Tibial artery (tissue), 4 donors: ENCODE measurements at regions of chr14 and their contacts with region 1.

Region 1: DNA sequence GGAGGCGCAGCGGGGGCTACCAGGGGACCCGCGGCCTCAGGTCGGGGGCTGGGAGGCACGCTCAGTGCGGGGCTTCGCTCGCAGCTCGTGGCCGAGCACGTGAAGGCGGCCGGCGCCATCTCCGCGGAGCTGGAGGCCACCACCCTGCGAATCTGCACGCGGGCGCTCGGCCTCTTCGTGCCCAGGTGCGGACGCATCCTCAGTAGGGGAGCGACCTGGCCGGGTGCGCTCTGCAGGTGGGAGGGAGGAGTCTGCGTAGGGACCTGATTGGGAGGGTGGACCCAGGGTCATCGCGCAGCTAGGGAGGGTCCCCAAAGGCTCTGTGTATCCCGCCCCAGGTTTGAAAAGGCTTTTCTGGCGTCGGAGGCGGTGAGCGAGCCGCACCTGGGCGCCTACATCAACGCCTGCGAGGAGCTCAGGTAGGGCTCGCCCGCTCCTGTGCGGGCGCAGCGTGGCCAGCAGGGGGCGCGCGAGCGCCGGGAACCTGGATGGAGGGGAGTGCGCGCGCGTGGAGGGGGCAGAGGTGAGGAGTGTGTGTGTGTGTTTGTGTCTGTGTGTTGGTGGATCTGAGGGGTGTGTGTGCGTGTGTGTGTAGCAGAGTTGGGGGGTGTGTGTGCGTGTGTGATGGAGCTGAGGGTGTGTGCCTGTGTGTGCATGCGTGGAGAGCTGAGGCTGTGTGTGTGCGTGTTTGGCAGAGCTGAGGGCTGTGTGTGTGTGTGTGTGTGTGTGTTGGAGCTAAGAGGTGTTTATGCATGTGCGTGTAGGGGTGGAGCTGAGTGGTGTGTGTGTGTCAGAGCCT is 10.3 kb downstream of the EXOC3L4 start:
- DNase-seq: no peak
- H3K4me3 ChIP-seq: no peak overlapping the region
- H3K27ac ChIP-seq: no peak overlapping the region
- H3K4me1 ChIP-seq: peaks cover 0 to 38% (median 24%) of the 10 kb centered on the region in 4 donors
- H3K27me3 ChIP-seq: peaks cover 3 to 91% of the 10 kb centered on the region in 2 donors
- CTCF ChIP-seq: peak; percentile 92

Region 2: DNA sequence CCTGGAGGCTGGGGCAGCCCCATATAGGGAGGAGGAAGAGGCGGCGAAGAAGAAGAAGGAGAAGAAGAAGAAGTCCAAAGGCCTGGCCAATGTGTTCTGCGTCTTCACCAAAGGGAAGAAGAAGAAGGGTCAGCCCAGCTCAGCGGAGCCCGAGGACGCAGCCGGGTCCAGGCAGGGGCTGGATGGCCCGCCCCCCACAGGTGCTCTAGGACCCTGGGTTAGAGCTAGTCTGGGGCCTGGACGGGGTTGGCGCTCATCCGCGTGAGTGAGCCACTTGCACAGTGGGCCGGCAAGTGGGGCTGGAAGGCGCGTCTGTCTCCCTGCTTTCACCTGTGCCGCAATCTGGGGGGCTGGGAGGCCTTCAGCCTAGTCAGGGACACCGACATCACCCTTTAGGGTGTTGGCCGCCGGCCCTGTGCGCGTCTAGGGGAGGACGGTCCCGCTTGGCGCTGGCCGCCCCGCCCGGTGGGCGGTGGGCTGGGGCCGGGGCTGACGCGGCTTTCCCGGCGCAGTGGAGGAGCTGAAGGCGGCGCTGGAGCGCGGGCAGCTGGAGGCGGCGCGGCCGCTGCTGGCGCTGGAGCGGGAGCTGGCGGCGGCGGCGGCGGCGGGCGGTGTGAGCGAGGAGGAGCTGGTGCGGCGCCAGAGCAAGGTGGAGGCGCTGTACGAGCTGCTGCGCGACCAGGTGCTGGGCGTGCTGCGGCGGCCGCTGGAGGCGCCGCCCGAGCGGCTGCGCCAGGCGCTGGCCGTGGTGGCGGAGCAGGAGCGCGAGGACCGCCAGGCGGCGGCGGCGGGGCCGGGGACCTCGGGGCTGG is 21.8 kb after region 1 on chr14:
- intact Hi-C with region 1: no loop called
- DNase-seq: no peak
- H3K4me3 ChIP-seq: peak overlapping the region; percentile 22 to 47
- H3K27ac ChIP-seq: no peak overlapping the region
- H3K4me1 ChIP-seq: peaks cover 0 to 88% (median 37%) of the 10 kb centered on the region in 4 donors
- H3K27me3 ChIP-seq: peaks cover 0 to 88% of the 10 kb centered on the region in 2 donors
- CTCF ChIP-seq: peak in 1 of 2 experiments; percentile 30

Region 3: DNA sequence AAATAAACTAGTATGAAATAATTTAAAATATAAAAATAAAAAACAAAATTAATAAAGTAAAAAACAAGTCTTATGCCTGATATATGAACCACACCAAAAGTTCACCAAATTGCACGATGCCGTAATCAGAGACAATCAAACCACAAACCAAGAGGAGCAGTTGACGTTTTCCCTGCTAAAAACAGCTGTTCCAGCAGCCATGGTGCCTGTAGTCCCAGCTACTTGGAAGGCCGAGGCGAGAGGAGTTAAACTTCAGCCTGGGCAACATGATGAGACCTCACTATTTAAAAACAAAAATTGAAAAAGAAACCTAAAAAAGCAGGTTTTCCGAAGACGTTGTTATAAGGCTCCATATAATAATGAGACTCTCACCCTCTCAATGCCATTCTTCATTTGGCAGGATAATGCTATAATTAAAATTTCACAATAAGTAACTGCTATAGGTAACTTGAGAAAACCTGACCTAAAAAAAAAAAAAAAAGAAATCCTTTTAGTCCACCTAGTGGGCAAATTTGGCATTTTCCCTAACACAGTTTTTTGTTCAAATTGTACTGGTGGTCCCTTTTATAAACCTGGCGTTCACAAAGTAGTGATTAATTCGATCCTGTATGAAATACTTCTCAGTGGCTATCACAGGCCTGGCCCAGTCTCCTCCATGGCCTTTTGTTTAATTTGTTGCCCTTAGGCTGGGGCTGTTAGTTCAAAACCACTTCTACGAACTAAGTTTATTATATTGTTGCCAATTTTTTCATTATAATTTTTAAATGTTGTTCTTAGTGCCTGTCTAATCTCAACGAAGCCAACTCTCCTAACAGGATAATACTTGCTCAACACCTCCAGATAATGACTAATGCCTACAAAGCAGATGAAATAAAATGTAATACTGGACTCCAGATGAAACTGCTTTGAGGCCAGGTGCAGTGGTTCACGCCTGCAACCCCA is 80.5 kb after region 1 on chr14:
- intact Hi-C with region 1: loop called (anchors 10 kb)
- DNase-seq: peak in 1 of 2 donors; percentile 9
- H3K4me3 ChIP-seq: no peak overlapping the region
- H3K27ac ChIP-seq: no peak overlapping the region
- H3K4me1 ChIP-seq: peaks cover 0 to 9% (median 7%) of the 10 kb centered on the region in 4 donors
- H3K27me3 ChIP-seq: peaks cover 0 to 49% of the 10 kb centered on the region in 2 donors
- CTCF ChIP-seq: peak; percentile 54 to 57

Region 4: DNA sequence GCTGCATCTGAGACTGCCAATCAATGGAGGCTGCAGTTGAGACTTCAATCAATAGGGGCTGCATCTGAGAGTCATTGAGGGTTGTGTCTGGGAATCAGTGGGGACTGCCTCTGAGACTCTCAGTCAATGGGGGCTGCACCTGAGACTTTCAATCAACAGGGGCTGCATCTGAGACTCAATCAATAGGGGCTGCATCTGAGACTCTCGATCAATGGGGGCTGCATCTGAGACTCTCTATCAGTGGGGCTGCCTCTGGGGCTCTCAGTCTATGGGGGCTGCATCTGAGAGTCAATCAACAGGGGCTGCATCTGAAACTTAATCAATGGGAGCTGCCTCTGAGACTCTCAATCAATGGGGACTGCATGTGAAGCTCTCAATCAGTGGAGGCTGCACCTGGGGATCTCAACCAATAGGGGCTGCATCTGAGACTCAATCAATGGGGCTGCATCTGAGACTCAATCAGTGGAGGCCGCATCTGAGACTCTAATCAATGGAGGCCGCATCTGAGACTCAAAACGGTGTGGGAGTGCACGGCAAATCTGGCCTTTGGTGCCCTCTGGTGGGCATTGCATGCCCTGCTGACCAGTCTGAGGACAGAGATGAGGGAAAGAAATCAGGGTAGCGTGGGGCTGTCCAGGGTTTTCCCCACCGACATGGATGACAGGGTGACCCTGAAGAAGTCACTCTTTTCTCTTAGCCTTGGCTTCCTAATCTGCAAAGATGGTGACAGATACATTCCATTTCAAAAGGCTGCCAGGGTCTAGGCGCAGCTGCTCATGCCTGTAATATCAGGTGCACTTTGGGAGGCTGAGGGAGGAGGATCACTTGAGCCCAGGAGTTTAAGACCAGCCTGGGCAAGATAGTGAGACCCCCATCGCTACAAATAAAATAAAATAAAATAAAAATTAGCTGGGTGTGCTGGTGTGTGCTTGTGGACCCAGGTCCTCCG is 187.8 kb after region 1 on chr14:
- intact Hi-C with region 1: loop called (anchors 1 kb)
- DNase-seq: peak; percentile 77 to 84
- H3K4me3 ChIP-seq: no peak overlapping the region
- H3K27ac ChIP-seq: no peak overlapping the region
- H3K4me1 ChIP-seq: no peaks in the 10 kb centered on the region
- H3K27me3 ChIP-seq: peaks cover 0 to 53% of the 10 kb centered on the region in 2 donors
- CTCF ChIP-seq: peak; percentile 91 to 92